H1 (cell line): ENCODE measurements at regions of chr21 and their contacts with region 1.

Region 1: DNA sequence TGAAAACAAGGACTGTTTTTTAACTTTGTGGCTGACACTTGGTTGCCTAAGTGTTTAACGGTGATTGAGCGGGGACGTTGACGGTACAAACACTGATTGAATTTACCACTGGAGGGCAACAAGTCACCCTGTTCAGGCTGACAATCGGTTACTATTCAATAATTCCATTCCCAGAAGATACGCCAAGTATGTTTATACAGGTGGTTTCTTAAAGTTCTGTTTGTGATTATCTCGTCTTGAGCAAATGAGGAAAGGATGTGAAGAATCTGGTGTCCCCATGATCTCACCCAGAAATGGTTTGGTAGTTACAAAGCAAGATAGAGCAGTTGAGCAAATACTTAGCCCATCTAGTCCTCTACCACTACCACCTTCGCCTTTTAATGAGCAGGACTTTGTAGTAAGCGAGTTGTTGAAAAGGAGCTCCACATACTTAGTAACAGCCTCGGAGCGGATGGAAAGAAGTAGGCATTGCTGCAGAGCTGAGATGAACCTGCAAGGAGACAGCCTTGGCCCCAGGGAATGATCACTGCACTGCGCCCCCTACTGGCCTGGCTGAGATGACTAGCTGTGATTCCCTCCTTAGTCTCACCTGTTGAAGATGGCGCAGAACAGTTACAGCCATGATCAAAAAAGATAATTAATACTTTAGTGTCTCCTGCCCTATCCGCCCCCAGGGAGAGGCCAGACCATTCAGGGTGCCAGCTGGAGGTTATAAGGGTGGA is 36.3 kb downstream of the IFNAR1 start:
- DNase-seq: peak; percentile 65 to 96
- H3K4me3 ChIP-seq: peak overlapping the region in 1 of 4 experiments; percentile 47; a peak in 2 of 8 replicates
- H3K27ac ChIP-seq: no peak overlapping the region; the same call in 1 of the 2 replicates
- H3K4me1 ChIP-seq: peaks cover 0 to 14% (median 8%) of the 10 kb centered on the region in 4 experiments; a peak in 6 of 7 replicates
- H3K27me3 ChIP-seq: no peaks in the 10 kb centered on the region
- CTCF ChIP-seq: peak; percentile 88 to 99 (median 98)
- EP300 ChIP-seq: 0 out of 3 replicates have a peak, but pooled peaks of 1 of the 2 experiments have one; percentile 25
- POLR2A ChIP-seq: peak in 1 of 2 experiments; percentile 51; a peak in 1 of 3 replicates
- RAD21 ChIP-seq: peak; percentile 69 to 70

Region 2: GRCh38 chr21:33324291-33325221 is 36.5 kb before region 1 on chr21 and contains the start of gene IFNAR1:
- CTCF ChIA-PET with region 1: interaction called, 17 read pairs
- POLR2A ChIA-PET with region 1: interaction called, 19 read pairs
- DNase-seq: peak; percentile 91 to 96
- H3K4me3 ChIP-seq: peak within 1 kb of the TSS; percentile 67 to 94 (median 80)
- H3K27ac ChIP-seq: peak within 1 kb of the TSS; percentile 68
- H3K4me1 ChIP-seq: 0 out of 7 replicates have a peak, but pooled peaks cover 0 to 3% (median under 1%) of the 10 kb centered on the region in 4 experiments
- H3K27me3 ChIP-seq: no peaks in the 10 kb centered on the region
- CTCF ChIP-seq: no peak
- EP300 ChIP-seq: no peak
- POLR2A ChIP-seq: peak; percentile 70 to 83; a peak in 2 of 3 replicates
- RAD21 ChIP-seq: 0 out of 4 replicates have a peak, but pooled peaks of 1 of the 2 experiments have one; percentile 1
- total RNA-seq, gene IFNAR1: 13.4 and 17.1 TPM in 2 replicates

Region 3: GRCh38 chr21:33348706-33349105 is 12.3 kb before region 1 on chr21:
- CTCF ChIA-PET with region 1: interaction called, 44 read pairs
- POLR2A ChIA-PET with region 1: interaction called, 9 read pairs
- DNase-seq: no peak
- H3K4me3 ChIP-seq: no peak overlapping the region
- H3K27ac ChIP-seq: no peak overlapping the region
- H3K4me1 ChIP-seq: no peaks in the 10 kb centered on the region
- H3K27me3 ChIP-seq: no peaks in the 10 kb centered on the region
- CTCF ChIP-seq: no peak
- EP300 ChIP-seq: no peak
- POLR2A ChIP-seq: no peak
- RAD21 ChIP-seq: no peak

Region 4: GRCh38 chr21:33380483-33380998 is 19.5 kb after region 1 on chr21:
- CTCF ChIA-PET with region 1: interaction called, 35 read pairs
- POLR2A ChIA-PET with region 1: interaction called, 12 read pairs
- DNase-seq: peak in 1 of 2 experiments; percentile 41
- H3K4me3 ChIP-seq: no peak overlapping the region
- H3K27ac ChIP-seq: no peak overlapping the region
- H3K4me1 ChIP-seq: peaks cover 0 to 5% (median 3%) of the 10 kb centered on the region in 4 experiments; a peak in 2 of 7 replicates
- H3K27me3 ChIP-seq: no peaks in the 10 kb centered on the region
- CTCF ChIP-seq: no peak
- EP300 ChIP-seq: no peak
- POLR2A ChIP-seq: no peak
- RAD21 ChIP-seq: no peak

Region 5: GRCh38 chr21:33403779-33404585 is 42.9 kb after region 1 on chr21:
- CTCF ChIA-PET with region 1: interaction called, 3 read pairs
- POLR2A ChIA-PET with region 1: interaction called, 10 read pairs
- DNase-seq: peak in 1 of 2 experiments; percentile 77
- H3K4me3 ChIP-seq: peak overlapping the region; percentile 58 to 95 (median 76)
- H3K27ac ChIP-seq: no peak overlapping the region; the same call in 1 of the 2 replicates
- H3K4me1 ChIP-seq: peaks cover 2 to 6% (median 3%) of the 10 kb centered on the region in 4 experiments
- H3K27me3 ChIP-seq: no peaks in the 10 kb centered on the region
- CTCF ChIP-seq: no peak
- EP300 ChIP-seq: no peak
- POLR2A ChIP-seq: peak in 1 of 2 experiments; percentile 41; a peak in 1 of 3 replicates
- RAD21 ChIP-seq: no peak

Region 6: GRCh38 chr21:33443194-33443593 is 82.2 kb after region 1 on chr21:
- CTCF ChIA-PET with region 1: interaction called, 13 read pairs
- POLR2A ChIA-PET with region 1: interaction called, 5 read pairs
- DNase-seq: no peak
- H3K4me3 ChIP-seq: no peak overlapping the region
- H3K27ac ChIP-seq: no peak overlapping the region
- H3K4me1 ChIP-seq: no peaks in the 10 kb centered on the region
- H3K27me3 ChIP-seq: no peaks in the 10 kb centered on the region
- CTCF ChIP-seq: no peak
- EP300 ChIP-seq: no peak
- POLR2A ChIP-seq: no peak
- RAD21 ChIP-seq: no peak

Region 7: DNA sequence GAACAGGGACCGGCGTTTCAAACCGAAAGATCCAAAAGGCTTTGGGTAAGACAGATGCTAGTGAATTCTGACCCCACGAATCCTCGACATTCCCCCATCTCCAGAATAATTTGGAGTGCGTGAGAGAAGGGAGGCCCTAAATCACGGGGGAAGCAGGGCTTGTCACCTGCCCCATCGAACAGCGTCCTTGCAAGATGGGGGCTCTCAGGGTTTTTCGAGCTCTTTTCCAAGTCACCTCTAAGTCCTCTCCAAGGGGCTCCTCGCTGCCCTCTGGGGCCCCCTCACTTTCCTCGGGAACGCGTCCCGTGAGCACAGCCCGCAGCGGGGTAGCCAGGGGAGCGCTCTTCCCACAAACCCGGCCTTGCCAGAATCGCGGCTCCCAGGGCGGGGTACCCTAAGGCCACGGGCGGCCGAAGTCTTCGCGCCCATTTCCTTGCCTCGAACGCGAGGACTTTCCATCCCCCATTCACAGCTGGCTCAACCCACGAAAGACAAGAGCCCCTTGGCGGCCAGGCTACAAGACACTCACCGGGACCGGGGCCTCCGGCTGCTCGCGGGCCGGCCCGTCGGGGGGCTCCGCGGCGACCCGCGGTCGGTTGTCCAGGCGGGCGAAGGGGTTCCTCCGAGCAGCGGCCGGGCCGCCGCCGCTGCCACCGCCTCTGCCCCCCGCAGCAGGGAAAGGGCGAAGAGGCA is 226.9 kb after region 1 on chr21:
- CTCF ChIA-PET with region 1: no interaction called
- POLR2A ChIA-PET with region 1: no interaction called
- DNase-seq: no peak
- H3K4me3 ChIP-seq: peak overlapping the region; percentile 66 to 90 (median 88)
- H3K27ac ChIP-seq: peak overlapping the region; percentile 72; the same call in 1 of the 2 replicates
- H3K4me1 ChIP-seq: peaks cover 0 to 2% (median under 1%) of the 10 kb centered on the region in 4 experiments; a peak in 2 of 7 replicates
- H3K27me3 ChIP-seq: no peaks in the 10 kb centered on the region
- CTCF ChIP-seq: no peak
- EP300 ChIP-seq: no peak
- POLR2A ChIP-seq: no peak
- RAD21 ChIP-seq: no peak